ENCODE measurements at regions of chr4 and their contacts with region 1.

Region 1: GRCh38 chr4:111890412-111890811 is 254.8 kb upstream of the FAM241A start:
- DNase-seq: no peak
- ATAC-seq: no peak
- H3K4me3 ChIP-seq: no peak overlapping the region
- H3K4me3 Mint-ChIP-seq: no peak overlapping the region
- H3K27ac ChIP-seq: no peak overlapping the region
- H3K27ac Mint-ChIP-seq: no peak overlapping the region
- H3K4me1 ChIP-seq: no peaks in the 10 kb centered on the region
- H3K4me1 Mint-ChIP-seq: no peaks in the 10 kb centered on the region
- H3K27me3 ChIP-seq: no peaks in the 10 kb centered on the region
- H3K27me3 Mint-ChIP-seq: no peaks in the 10 kb centered on the region
- CTCF ChIP-seq: no peak

Region 2: GRCh38 chr4:111330786-111331185 is 559.6 kb before region 1 on chr4:
- CTCF ChIA-PET with region 1: no interaction called
- POLR2A ChIA-PET with region 1: no interaction called
- intact Hi-C with region 1: loop called in 1 of 2 experiments (anchors 5 kb)
- DNase-seq: no peak
- ATAC-seq: no peak
- H3K4me3 ChIP-seq: no peak overlapping the region
- H3K4me3 Mint-ChIP-seq: no peak overlapping the region
- H3K27ac ChIP-seq: no peak overlapping the region
- H3K27ac Mint-ChIP-seq: no peak overlapping the region
- H3K4me1 ChIP-seq: no peaks in the 10 kb centered on the region
- H3K4me1 Mint-ChIP-seq: no peaks in the 10 kb centered on the region
- H3K27me3 ChIP-seq: no peaks in the 10 kb centered on the region
- H3K27me3 Mint-ChIP-seq: no peaks in the 10 kb centered on the region
- CTCF ChIP-seq: no peak

Region 3: GRCh38 chr4:111905511-111905910 is 15.1 kb after region 1 on chr4:
- CTCF ChIA-PET with region 1: no interaction called
- POLR2A ChIA-PET with region 1: no interaction called
- intact Hi-C with region 1: no loop called
- DNase-seq: no peak
- ATAC-seq: no peak
- H3K4me3 ChIP-seq: no peak overlapping the region
- H3K4me3 Mint-ChIP-seq: no peak overlapping the region
- H3K27ac ChIP-seq: no peak overlapping the region
- H3K27ac Mint-ChIP-seq: no peak overlapping the region
- H3K4me1 ChIP-seq: no peaks in the 10 kb centered on the region
- H3K4me1 Mint-ChIP-seq: no peaks in the 10 kb centered on the region
- H3K27me3 ChIP-seq: no peaks in the 10 kb centered on the region
- H3K27me3 Mint-ChIP-seq: no peaks in the 10 kb centered on the region
- CTCF ChIP-seq: no peak

Region 4: GRCh38 chr4:112560084-112560483 is 669.7 kb after region 1 on chr4:
- CTCF ChIA-PET with region 1: no interaction called
- POLR2A ChIA-PET with region 1: no interaction called
- intact Hi-C with region 1: no loop called
- DNase-seq: no peak
- ATAC-seq: no peak
- H3K4me3 ChIP-seq: no peak overlapping the region
- H3K4me3 Mint-ChIP-seq: no peak overlapping the region
- H3K27ac ChIP-seq: no peak overlapping the region
- H3K27ac Mint-ChIP-seq: no peak overlapping the region
- H3K4me1 ChIP-seq: no peaks in the 10 kb centered on the region
- H3K4me1 Mint-ChIP-seq: no peaks in the 10 kb centered on the region
- H3K27me3 ChIP-seq: no peaks in the 10 kb centered on the region
- H3K27me3 Mint-ChIP-seq: no peaks in the 10 kb centered on the region
- CTCF ChIP-seq: no peak

Measured in CD4-positive, alpha-beta T cell (primary cell).